ENCODE measurements at regions of chr2 and their contacts with region 1.

Region 1: DNA sequence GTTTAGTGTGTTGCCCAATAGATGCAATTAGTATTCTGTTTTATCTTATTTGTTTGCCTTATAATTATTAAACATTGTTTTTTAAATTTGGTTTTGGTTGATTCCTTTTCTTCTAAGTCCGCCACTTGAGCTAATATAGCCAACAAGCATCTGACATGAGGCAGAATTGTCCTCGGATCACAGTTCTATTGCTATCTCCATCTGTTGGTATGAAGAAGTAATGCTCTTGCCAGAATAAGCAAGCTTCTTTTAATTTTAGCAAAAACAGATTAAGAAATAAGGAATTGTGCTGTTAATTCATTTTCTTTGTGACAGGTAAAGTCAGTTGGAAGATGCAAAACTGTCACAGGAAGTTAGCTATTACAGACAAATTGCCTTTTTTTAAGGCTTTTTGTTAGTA is 54.3 kb downstream of the R3HDM1 start:
- DNase-seq: no peak
- H3K4me3 ChIP-seq: no peak overlapping the region
- H3K27ac ChIP-seq: no peak overlapping the region
- H3K4me1 ChIP-seq: no peaks in the 10 kb centered on the region
- H3K27me3 ChIP-seq: no peaks in the 10 kb centered on the region
- CTCF ChIP-seq: no peak
- EP300 ChIP-seq: no peak
- POLR2A ChIP-seq: no peak

Region 2: DNA sequence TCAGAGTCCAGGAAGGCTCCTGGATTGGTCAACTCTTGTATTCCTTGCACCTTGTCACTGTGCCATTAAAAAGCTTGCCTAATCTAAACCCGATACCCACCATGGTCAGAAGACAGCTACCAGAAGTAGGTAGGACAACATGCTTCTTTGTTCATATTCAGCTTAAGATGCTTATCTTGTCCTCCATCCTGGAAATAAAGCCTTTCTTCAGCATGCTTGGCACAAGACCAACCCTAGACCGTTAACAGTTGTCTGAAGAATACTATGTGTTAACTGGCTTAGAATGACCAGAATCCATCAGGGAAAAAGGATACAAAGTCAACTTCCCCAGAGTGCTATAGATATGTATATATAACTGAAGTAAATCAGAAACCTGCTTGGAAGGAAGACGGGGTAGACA is 248.5 kb before region 1 on chr2:
- in situ Hi-C with region 1: no loop called
- intact Hi-C with region 1: no loop called
- DNase-seq: no peak
- H3K4me3 ChIP-seq: no peak overlapping the region
- H3K27ac ChIP-seq: no peak overlapping the region
- H3K4me1 ChIP-seq: no peaks in the 10 kb centered on the region
- H3K27me3 ChIP-seq: no peaks in the 10 kb centered on the region
- CTCF ChIP-seq: no peak
- EP300 ChIP-seq: no peak
- POLR2A ChIP-seq: no peak

Region 3: DNA sequence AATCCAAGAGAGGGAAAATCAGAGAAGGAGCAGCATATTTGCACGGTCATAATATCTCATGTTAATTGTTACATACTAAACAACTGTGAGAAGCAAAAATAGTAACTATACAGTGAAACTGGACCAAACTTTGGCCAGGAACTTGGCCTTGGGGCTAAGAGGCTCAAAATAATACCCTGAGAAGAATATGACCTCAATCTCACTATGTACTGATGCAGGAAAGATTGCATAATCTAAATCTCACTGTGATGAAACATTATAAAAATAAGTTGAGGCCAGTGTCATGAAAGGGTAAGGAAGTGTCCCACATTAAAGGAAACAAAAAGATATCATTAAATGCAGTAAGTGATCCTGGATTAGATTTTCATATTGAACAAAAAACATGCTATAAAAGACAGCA is 91.1 kb before region 1 on chr2:
- in situ Hi-C with region 1: loop called in 1 of 4 experiments (anchors 25 kb)
- intact Hi-C with region 1: no loop called
- DNase-seq: no peak
- H3K4me3 ChIP-seq: no peak overlapping the region
- H3K27ac ChIP-seq: no peak overlapping the region
- H3K4me1 ChIP-seq: no peaks in the 10 kb centered on the region
- H3K27me3 ChIP-seq: no peaks in the 10 kb centered on the region
- CTCF ChIP-seq: no peak
- EP300 ChIP-seq: no peak
- POLR2A ChIP-seq: no peak

Region 4: GRCh38 chr2:135676031-135676430 is 90.4 kb after region 1 on chr2:
- in situ Hi-C with region 1: no loop called
- intact Hi-C with region 1: no loop called
- DNase-seq: no peak
- H3K4me3 ChIP-seq: no peak overlapping the region
- H3K27ac ChIP-seq: no peak overlapping the region
- H3K4me1 ChIP-seq: no peaks in the 10 kb centered on the region
- H3K27me3 ChIP-seq: no peaks in the 10 kb centered on the region
- CTCF ChIP-seq: no peak
- EP300 ChIP-seq: no peak
- POLR2A ChIP-seq: no peak

Region 5: GRCh38 chr2:137173463-137173862 is 1587.9 kb after region 1 on chr2:
- in situ Hi-C with region 1: no loop called
- intact Hi-C with region 1: loop called (anchors 10 kb)
- DNase-seq: no peak
- H3K4me3 ChIP-seq: no peak overlapping the region
- H3K27ac ChIP-seq: no peak overlapping the region
- H3K4me1 ChIP-seq: no peaks in the 10 kb centered on the region
- H3K27me3 ChIP-seq: no peaks in the 10 kb centered on the region
- CTCF ChIP-seq: no peak
- EP300 ChIP-seq: no peak
- POLR2A ChIP-seq: no peak